HepG2 (cell line): ENCODE measurements at regions of chr21 and their contacts with region 1.

Region 1: GRCh38 chr21:44517175-44517899 is 22.7 kb downstream of the KRTAP10-1 start:
- DNase-seq: peak; percentile 93
- ATAC-seq: peak; percentile 78
- H3K4me3 ChIP-seq: peak overlapping the region in 2 of 3 experiments; percentile 48 to 56; a peak in 5 of 6 replicates
- H3K27ac ChIP-seq: peak overlapping the region; percentile 16
- H3K4me1 ChIP-seq: peaks cover 41% of the 10 kb centered on the region
- H3K27me3 ChIP-seq: no peaks in the 10 kb centered on the region
- CTCF ChIP-seq: no peak
- EP300 ChIP-seq: no peak
- POLR2A ChIP-seq: peak in 1 of 2 experiments; percentile 59; a peak in 1 of 4 replicates
- RAD21 ChIP-seq: no peak

Region 2: DNA sequence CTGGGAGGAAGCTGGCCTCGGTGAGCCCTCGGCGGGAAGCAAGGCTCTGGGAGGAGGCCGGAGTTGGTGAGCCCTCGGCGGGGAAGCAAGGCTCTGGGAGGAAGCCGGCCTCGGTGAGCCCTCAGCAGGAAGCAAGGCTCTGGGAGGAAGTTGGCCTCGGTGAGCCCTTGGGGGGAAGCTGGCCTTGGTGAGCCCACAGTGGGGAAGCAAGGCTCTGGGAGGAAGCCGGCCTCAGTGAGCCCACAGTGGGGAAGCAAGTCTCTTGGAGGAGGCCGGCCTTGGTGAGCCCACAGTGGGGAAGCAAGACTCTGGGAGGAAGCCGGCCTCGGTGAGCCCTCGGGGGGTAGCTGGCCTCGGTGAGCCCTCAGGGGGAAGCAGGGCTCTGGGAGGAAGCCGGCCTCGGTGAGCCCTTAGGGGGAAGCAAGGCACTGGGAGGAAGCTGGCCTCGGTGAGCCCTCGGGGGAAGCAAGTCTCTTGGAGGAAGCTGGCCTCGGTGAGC is 13.4 kb before region 1 on chr21:
- CTCF ChIA-PET with region 1: no interaction called
- POLR2A ChIA-PET with region 1: interaction called, 49 read pairs
- in situ Hi-C with region 1: no loop called
- intact Hi-C with region 1: no loop called
- DNase-seq: no peak
- ATAC-seq: no peak
- H3K4me3 ChIP-seq: no peak overlapping the region
- H3K27ac ChIP-seq: no peak overlapping the region
- H3K4me1 ChIP-seq: peaks cover 39% of the 10 kb centered on the region
- H3K27me3 ChIP-seq: no peaks in the 10 kb centered on the region; a peak in 1 of 5 replicates
- CTCF ChIP-seq: no peak
- EP300 ChIP-seq: no peak
- POLR2A ChIP-seq: no peak
- RAD21 ChIP-seq: no peak